ENCODE measurements at regions of chr6 and their contacts with region 1.

Region 1: GRCh38 chr6:25061289-25061936 is 125.7 kb upstream of the RIPOR2 start:
- DNase-seq: no peak

Region 2: DNA sequence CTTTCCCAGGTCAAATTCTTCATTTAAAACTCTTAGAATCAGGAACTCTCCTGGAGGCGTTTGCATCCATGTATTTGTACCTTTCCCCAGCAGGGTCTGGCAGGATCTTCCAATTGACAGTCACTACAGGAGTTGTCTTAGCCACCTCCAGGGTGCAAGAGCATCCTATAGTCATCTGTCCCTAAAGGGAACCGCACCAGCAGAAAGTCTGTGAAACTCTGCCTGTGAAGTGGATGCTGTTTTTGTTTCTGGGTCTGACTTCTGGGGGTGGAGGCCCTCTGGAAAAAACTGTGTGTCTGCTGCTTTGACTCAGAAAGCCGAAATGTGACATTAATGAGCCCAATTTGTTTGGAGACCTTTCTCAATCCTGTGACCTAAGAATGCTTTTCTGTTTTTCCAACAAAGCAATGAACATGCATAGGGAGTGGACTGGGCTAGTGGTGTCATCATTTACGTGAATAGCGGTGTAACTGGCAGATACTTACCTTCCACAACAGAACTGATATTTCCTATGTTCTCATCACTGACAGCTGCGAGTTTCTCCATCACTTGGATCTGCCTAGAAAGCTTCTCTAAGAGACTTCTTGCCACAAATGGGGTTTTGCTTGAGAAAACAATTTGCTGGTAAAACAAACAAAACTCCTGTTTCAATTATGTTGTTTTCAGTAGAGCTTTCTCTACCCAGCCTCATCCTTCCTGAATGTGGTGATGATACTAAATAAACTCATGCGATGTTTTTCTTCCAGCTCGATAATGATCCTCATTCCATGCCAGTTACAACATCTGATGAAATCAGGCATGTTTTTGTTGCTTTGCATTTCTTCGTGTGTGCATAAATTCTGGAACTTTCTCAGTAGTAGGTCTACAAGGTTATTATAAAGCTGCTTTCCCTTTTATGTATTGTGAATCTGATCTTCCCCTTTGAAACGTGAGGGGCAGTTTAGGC is 229.4 kb before region 1 on chr6:
- intact Hi-C with region 1: loop called in 1 of 2 experiments (anchors 10 kb)
- DNase-seq: no peak

Region 3: GRCh38 chr6:25042036-25042521 is 19.3 kb before region 1 on chr6:
- intact Hi-C with region 1: no loop called
- DNase-seq: no peak

Region 4: GRCh38 chr6:25596928-25597818 is 535.8 kb after region 1 on chr6:
- intact Hi-C with region 1: loop called in 1 of 2 experiments (anchors 5 kb)
- DNase-seq: no peak

Measured in posterior vena cava (tissue), 2 donors.